Breast epithelium (tissue), 4 donors: ENCODE measurements at regions of chr3 and their contacts with region 1.

Region 1: DNA sequence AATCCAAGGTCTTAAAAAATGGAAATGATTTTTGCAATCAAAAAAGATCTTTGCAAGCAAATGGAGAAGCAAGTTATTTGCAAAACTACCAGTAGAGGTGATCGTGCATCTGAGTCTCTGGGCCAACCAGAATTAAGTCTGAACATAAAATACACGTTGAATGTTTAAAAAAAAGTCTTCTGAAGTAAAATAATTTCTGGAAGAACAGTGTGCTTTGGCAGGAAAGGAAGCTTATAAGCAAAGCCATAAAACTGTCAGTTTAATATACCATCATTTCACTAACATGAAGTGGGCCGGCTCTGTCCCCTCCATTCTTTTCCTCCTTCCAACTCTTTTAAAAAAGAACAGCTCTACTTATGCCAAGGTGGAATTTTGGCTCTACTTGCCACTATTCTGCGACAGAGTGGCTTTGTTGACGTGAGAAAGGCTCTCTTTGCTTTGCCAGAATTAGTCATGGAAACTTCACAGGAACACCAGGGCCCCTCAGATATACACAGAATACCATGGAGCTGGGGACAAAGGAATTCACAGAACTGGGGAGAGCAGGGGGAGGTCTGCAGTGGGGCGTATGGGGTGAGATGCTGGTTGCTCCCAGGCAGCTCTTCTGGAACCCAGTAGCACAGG is 29.8 kb downstream of the FSTL1 start:
- DNase-seq: no peak
- H3K4me3 ChIP-seq: no peak overlapping the region
- H3K27ac ChIP-seq: peak overlapping the region; percentile 69 to 71
- H3K4me1 ChIP-seq: peaks cover 0 to 8% of the 10 kb centered on the region in 2 donors
- H3K27me3 ChIP-seq: no peaks in the 10 kb centered on the region
- CTCF ChIP-seq: peak in 1 of 3 donors; percentile 11
- POLR2A ChIP-seq: no peak

Region 2: DNA sequence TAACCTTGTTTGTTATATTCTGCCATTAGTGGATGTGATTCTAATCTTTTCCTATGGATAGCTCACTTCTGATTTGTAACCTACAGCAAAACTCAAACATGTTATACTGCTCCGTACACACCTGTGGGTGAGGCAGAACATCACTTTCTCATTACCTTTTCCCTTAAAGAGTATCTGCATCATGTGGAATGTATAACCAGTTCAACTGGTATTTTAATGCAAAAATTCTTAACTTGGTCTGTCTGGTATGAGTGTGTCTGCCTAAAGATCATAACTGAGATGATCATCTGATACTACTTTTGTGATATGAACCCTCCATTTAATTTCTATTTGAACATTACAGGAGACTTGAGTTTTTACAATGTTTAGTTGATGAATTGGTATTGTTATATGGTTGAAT is 1260.7 kb before region 1 on chr3:
- intact Hi-C with region 1: no loop called
- DNase-seq: no peak
- H3K4me3 ChIP-seq: no peak overlapping the region
- H3K27ac ChIP-seq: no peak overlapping the region
- H3K4me1 ChIP-seq: no peaks in the 10 kb centered on the region
- H3K27me3 ChIP-seq: no peaks in the 10 kb centered on the region
- CTCF ChIP-seq: no peak
- POLR2A ChIP-seq: no peak

Region 3: DNA sequence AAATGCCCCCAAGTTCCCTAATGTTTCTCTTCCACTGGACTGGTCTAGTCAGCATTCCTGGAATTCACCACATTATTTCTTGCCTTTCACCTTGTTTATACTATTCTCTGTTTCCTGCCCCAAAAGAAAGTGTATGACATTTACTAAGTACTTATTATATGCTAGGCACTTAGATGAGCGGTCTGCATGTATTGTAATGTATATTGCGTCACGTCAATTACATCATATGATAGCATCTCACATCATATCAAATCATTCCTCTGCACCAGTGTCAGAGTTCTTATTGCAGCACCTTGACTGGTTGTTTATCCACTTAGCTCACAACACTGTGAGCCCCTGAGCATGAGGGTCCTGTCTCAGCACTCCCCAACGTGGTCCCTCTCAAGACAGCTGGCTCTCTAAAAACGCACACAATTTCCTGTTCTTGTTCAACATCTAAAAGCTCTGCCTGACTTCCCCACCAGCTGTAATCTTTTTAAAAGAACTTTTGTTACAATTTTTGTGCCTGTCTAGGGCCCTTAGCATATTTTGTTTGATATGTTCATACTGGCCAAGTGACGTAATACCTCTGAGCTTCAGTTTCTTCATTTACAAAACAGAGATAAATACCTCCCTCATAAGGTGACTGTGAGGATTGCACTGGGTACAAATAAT is 1068.1 kb before region 1 on chr3:
- intact Hi-C with region 1: loop called (anchors 10 kb)
- DNase-seq: no peak
- H3K4me3 ChIP-seq: no peak overlapping the region
- H3K27ac ChIP-seq: peak overlapping the region in 1 of 2 donors; percentile 66
- H3K4me1 ChIP-seq: no peaks in the 10 kb centered on the region
- H3K27me3 ChIP-seq: no peaks in the 10 kb centered on the region
- CTCF ChIP-seq: peak in 1 of 3 donors; percentile 43
- POLR2A ChIP-seq: no peak

Region 4: GRCh38 chr3:120438665-120439370 is 17.8 kb after region 1 on chr3:
- intact Hi-C with region 1: no loop called
- DNase-seq: peak in 1 of 2 donors; percentile 52
- H3K4me3 ChIP-seq: peak overlapping the region in 1 of 3 donors; percentile 33
- H3K27ac ChIP-seq: peak overlapping the region; percentile 33 to 66
- H3K4me1 ChIP-seq: peaks cover 0 to 17% of the 10 kb centered on the region in 2 donors
- H3K27me3 ChIP-seq: no peaks in the 10 kb centered on the region
- CTCF ChIP-seq: no peak
- POLR2A ChIP-seq: no peak

Region 5: DNA sequence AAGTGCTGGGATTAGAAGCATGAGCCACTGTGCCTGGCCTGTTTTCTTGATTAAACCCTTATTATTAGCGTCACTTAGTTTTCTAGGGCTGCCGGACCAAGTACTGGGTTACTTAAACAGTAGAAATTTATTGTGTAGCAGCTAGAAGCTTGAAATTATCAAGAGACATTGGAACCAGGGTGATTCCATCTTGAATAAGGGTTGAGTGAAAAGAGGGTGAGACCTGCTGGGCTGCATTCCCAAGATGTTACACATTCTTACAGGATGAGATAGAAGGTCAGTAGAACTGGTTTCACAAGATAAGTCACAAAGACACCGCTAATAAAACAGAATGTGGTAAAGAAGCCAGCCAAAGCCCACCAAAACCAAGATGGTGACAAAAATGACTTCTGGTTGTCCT is 48.4 kb after region 1 on chr3:
- intact Hi-C with region 1: loop called (anchors 2 kb)
- DNase-seq: peak in 1 of 2 donors; percentile 64
- H3K4me3 ChIP-seq: no peak overlapping the region
- H3K27ac ChIP-seq: peak overlapping the region in 1 of 2 donors; percentile 57
- H3K4me1 ChIP-seq: no peaks in the 10 kb centered on the region
- H3K27me3 ChIP-seq: no peaks in the 10 kb centered on the region
- CTCF ChIP-seq: no peak
- POLR2A ChIP-seq: no peak